ENCODE measurements at regions of chr1 and their contacts with region 1.

Region 1: DNA sequence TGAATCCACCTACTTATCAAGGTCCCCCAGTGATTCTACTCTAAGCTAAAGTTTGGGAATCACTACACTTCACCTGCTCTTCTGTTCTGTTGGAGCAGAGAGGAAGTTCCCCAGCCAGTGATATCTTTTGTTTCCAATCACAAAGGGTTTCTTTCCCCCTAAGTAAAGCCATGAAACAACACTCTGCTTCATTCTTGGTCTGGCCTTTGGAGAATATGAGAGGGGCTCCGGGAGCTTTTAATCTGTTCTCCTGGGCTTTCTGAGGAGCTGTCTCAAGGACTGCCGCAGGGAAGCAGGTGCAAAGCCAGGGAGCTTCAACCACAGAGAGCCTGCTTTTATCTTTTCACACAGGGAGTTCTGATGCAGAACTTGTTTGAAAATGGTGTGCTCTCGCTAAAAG is 10.1 kb upstream of the SLAMF9 start:
- DNase-seq: no peak
- H3K4me3 Mint-ChIP-seq: no peak overlapping the region
- H3K27ac Mint-ChIP-seq: no peak overlapping the region
- H3K4me1 Mint-ChIP-seq: peaks cover 25% of the 10 kb centered on the region
- H3K27me3 Mint-ChIP-seq: peaks cover 41% of the 10 kb centered on the region
- CTCF ChIP-seq: no peak

Region 2: DNA sequence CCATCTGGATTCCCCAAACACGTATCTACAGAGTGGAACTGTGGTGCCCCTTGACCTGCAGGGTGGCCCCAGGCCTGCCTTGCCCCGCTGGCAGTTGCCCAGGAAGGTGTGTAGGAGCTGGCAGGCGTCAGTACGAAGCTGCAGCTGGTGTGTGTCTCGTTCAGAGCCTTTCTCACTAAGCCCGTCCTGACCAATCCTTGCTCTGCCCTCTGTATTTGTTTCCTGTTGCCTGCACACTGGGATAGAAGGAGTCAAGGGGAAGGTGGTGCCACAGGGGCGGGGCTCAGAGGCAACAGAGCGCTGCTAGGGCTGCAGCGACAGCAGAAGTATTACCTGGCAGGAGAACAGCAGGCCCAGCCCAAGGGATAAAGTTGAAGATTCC is 96.5 kb before region 1 on chr1:
- CTCF ChIA-PET with region 1: no interaction called
- intact Hi-C with region 1: no loop called
- DNase-seq: peak; percentile 57
- H3K4me3 Mint-ChIP-seq: no peak overlapping the region
- H3K27ac Mint-ChIP-seq: no peak overlapping the region
- H3K4me1 Mint-ChIP-seq: peaks cover 11% of the 10 kb centered on the region
- H3K27me3 Mint-ChIP-seq: peaks cover 23% of the 10 kb centered on the region
- CTCF ChIP-seq: no peak

Region 3: GRCh38 chr1:159996653-159997052 is 32.5 kb after region 1 on chr1:
- CTCF ChIA-PET with region 1: interaction called, 4 read pairs
- intact Hi-C with region 1: loop called (anchors 2 kb)
- DNase-seq: peak; percentile 16
- H3K4me3 Mint-ChIP-seq: no peak overlapping the region
- H3K27ac Mint-ChIP-seq: no peak overlapping the region
- H3K4me1 Mint-ChIP-seq: peaks cover 9% of the 10 kb centered on the region
- H3K27me3 Mint-ChIP-seq: peaks cover 31% of the 10 kb centered on the region
- CTCF ChIP-seq: no peak

Measured in Calu3 (cell line).